Mucosa of descending colon (tissue), 3 donors: ENCODE measurements at regions of chr2 and their contacts with region 1.

Region 1: GRCh38 chr2:207166039-207166348 is 246 bp upstream of the KLF7 start:
- DNase-seq: peak; percentile 95 to 97 (median 96)
- ATAC-seq: peak; percentile 94
- H3K4me3 ChIP-seq: peak overlapping the region; percentile 64
- H3K4me1 ChIP-seq: no peaks in the 10 kb centered on the region
- CTCF ChIP-seq: no peak

Region 2: DNA sequence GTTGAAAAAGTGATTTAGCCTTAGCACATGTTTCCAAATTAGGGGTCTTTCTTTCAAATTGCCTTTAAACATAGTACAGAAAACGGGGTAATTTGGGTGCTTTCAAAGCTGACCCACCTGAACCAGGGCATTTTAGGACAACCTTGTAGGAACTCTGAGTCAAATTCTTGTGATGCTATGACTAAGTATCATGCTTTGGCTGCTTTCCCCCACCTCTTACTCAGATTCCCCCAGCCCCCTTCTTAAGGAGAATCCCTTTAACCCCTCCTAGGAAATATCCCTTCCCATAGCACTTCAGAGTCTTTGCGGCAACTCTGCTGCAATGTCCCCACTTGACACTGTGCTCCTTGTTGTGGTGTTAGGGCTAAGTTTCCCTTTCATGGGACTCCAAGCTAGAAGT is 18.4 kb after region 1 on chr2:
- intact Hi-C with region 1: no loop called
- DNase-seq: no peak
- ATAC-seq: no peak
- H3K4me3 ChIP-seq: no peak overlapping the region
- H3K4me1 ChIP-seq: no peaks in the 10 kb centered on the region
- CTCF ChIP-seq: no peak

Region 3: DNA sequence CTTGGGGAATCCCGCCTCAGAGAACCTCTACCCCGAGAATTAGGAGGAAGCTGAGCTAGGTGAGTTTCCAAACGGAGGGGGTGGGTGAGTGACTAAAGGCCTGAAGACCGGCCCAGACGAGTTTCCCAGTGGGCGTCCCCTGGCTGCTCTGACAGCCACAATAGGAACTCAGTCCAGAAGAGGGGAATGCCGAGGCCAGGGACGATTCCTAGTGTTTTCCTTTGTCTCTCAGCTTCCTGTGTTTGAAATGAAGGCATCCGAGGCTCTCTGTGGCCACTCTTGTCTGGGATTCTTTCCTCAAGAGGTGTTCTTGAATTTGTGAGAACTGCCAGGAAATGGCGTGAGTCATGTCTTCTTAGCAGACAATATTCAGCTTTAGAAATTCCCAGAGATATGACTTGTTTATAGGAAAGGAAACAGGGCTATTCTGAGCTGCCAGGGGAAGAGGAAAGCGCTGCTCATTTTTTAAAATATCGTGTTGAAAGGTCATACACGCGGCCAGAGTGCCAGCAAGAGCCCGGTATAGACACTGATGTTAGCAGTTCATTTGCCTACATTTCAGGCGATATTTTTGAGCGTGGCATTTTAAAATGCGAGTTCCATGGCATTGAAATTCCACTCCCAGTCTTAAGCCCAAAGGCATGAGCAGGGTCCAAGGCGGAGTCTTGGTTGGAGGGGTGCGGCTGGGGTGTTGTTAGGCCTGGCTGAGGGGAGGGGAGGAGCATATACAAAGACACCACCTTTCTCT is 168.8 kb after region 1 on chr2:
- intact Hi-C with region 1: loop called in 1 of 2 experiments (anchors 10 kb)
- DNase-seq: peak in 2 of 3 donors; percentile 26 to 29
- ATAC-seq: peak; percentile 59
- H3K4me3 ChIP-seq: no peak overlapping the region
- H3K4me1 ChIP-seq: no peaks in the 10 kb centered on the region
- CTCF ChIP-seq: no peak